Calu3 (cell line): ENCODE measurements at regions of chr3 and their contacts with region 1.

Region 1: DNA sequence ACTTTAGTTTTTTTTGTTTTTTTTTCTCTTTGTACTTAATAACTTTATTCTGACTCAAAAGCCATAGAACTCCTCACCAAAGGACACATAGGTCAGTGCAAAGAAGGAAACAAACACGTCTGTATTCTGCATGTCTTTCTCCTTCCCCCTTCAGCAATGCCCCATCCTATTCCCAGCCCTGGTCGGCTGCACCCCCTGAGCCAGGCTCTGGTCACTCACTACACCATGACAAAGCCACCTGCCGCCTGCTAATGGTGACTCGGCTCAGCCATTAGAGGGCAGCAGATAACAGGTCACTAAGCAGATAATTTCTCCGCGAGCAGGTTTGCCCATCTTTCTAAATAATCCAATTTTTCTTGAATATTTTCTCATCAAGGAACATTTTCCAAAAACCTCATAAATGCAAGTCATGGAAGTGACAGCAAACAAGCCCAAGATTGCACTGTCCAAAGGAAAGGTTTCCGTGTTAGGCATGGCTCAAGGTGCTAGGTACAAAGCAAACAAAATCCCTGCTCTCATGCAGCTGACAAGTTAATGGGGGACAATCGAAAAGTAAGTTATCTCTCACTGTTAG is 37.8 kb downstream of the TM4SF4 start:
- DNase-seq: peak; percentile 82
- H3K4me3 Mint-ChIP-seq: no peak overlapping the region
- H3K27ac Mint-ChIP-seq: peak overlapping the region; percentile 21
- H3K4me1 Mint-ChIP-seq: peaks cover 27% of the 10 kb centered on the region
- H3K27me3 Mint-ChIP-seq: no peaks in the 10 kb centered on the region
- CTCF ChIP-seq: peak; percentile 87

Region 2: GRCh38 chr3:149717391-149718056 is 205.2 kb after region 1 on chr3:
- CTCF ChIA-PET with region 1: interaction called, 4 read pairs
- intact Hi-C with region 1: loop called (anchors 1 kb)
- DNase-seq: peak; percentile 74
- H3K4me3 Mint-ChIP-seq: peak overlapping the region; percentile 20
- H3K27ac Mint-ChIP-seq: peak overlapping the region; percentile 58
- H3K4me1 Mint-ChIP-seq: peaks cover 9% of the 10 kb centered on the region
- H3K27me3 Mint-ChIP-seq: no peaks in the 10 kb centered on the region
- CTCF ChIP-seq: peak; percentile 72

Region 3: DNA sequence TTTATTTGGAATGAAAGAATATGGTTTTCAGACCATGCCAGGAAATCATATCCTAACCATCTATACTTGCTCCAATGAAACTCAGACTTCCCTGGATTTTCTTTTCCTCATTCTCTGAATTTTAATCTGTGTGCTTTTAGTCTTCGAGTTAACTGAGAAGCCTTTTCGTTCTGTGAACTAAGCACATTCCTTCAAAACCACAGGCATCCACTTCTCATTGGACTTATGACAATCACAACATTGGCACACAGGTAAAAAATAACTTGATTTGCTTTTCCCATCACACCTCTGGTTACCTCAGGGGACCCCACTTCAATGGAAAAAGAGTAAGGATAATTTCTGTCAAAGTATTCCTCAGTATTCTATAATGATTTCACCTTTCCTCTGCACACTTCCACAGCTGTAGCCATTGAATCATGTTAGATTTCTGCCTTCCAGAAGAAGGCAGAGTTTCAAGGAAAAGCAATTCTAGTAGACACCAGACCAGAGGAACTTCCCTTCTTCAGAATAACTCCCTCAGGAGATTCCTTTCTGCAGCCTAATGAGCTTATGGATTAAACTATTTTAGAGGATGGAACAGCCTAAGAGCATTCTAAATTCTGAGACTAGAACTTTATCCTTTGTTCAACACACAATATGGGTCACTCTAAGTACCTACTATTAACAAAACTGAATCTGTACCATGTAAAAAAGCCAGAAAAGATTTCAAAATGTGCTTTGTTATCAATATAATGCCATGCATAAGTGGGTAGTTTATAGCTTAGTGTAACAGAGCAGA is 224.1 kb after region 1 on chr3:
- CTCF ChIA-PET with region 1: no interaction called
- intact Hi-C with region 1: loop called (anchors 5 kb)
- DNase-seq: peak; percentile 58
- H3K4me3 Mint-ChIP-seq: no peak overlapping the region
- H3K27ac Mint-ChIP-seq: peak overlapping the region; percentile 30
- H3K4me1 Mint-ChIP-seq: peaks cover 27% of the 10 kb centered on the region
- H3K27me3 Mint-ChIP-seq: no peaks in the 10 kb centered on the region
- CTCF ChIP-seq: no peak

Region 4: GRCh38 chr3:149752051-149752787 is 239.9 kb after region 1 on chr3 and contains the start of gene COMMD2:
- CTCF ChIA-PET with region 1: interaction called, 5 read pairs
- intact Hi-C with region 1: loop called (anchors 1 kb)
- DNase-seq: peak; percentile 92
- H3K4me3 Mint-ChIP-seq: peak within 1 kb of the TSS; percentile 99
- H3K27ac Mint-ChIP-seq: peak within 1 kb of the TSS; percentile 90
- H3K4me1 Mint-ChIP-seq: peaks cover 7% of the 10 kb centered on the region
- H3K27me3 Mint-ChIP-seq: no peaks in the 10 kb centered on the region
- CTCF ChIP-seq: peak; percentile 51
- total RNA-seq, gene COMMD2: 73.0 and 77.1 TPM in 2 replicates

Region 5: DNA sequence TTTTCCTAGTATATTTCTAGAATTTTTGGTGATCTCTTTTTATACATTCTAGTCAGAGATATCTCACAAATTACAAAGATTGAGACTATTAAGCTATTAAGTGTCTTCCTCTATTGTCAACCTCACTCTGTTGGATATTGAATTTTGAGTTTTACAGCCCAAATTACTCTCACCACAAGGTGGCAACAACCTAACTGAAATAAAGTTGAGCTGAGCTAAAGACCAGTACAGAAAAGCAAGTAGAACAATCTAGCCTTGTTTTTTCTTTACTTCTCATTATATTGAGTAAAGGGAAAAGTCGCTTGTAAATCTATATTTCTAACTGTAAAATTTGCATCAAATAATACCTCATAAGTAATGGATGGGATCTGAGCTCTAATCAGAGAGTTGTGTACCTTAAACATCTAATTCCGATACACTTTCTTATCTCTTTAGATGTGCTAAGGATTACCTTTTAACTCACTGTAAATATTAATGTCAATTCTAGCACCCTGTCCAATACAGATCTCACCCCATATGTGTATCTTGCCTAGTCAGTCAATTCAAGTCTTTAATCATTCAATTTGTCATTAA is 253.6 kb after region 1 on chr3:
- CTCF ChIA-PET with region 1: interaction called, 10 read pairs
- intact Hi-C with region 1: loop called (anchors 1 kb)
- DNase-seq: peak; percentile 28
- H3K4me3 Mint-ChIP-seq: no peak overlapping the region
- H3K27ac Mint-ChIP-seq: no peak overlapping the region
- H3K4me1 Mint-ChIP-seq: no peaks in the 10 kb centered on the region
- H3K27me3 Mint-ChIP-seq: no peaks in the 10 kb centered on the region
- CTCF ChIP-seq: peak; percentile 49

Region 6: DNA sequence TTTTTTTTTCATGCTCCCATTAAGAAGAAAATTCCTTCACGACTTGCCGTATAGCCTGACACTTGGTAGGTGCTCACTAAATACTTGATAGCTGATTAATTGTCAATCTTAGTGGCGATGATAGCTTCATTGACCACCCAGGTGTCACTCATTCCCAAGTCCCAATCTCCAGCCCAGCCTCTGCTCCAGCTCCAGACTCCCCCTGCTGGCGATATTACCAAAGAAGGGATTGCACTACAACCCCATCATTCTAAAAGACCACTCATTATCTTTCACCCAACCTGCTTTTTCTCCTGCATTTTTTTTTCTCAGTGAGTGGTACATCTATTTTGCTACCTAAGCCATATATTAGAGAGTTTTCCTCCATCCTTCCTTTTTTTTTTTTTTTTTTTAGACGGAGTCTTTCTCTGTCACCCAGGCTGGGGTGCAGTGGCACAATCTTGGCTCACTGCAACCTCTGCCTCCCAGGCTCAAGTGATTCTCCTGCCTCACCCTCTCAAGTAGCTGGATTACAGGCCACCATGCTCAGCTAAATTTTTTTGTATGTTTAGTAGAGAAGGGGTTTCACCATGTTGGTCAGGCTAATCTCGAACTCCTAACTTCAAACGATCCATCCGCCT is 259.5 kb after region 1 on chr3:
- CTCF ChIA-PET with region 1: interaction called, 10 read pairs
- intact Hi-C with region 1: loop called (anchors 1 kb)
- DNase-seq: peak; percentile 87
- H3K4me3 Mint-ChIP-seq: no peak overlapping the region
- H3K27ac Mint-ChIP-seq: no peak overlapping the region
- H3K4me1 Mint-ChIP-seq: no peaks in the 10 kb centered on the region
- H3K27me3 Mint-ChIP-seq: no peaks in the 10 kb centered on the region
- CTCF ChIP-seq: peak; percentile 95

Region 7: DNA sequence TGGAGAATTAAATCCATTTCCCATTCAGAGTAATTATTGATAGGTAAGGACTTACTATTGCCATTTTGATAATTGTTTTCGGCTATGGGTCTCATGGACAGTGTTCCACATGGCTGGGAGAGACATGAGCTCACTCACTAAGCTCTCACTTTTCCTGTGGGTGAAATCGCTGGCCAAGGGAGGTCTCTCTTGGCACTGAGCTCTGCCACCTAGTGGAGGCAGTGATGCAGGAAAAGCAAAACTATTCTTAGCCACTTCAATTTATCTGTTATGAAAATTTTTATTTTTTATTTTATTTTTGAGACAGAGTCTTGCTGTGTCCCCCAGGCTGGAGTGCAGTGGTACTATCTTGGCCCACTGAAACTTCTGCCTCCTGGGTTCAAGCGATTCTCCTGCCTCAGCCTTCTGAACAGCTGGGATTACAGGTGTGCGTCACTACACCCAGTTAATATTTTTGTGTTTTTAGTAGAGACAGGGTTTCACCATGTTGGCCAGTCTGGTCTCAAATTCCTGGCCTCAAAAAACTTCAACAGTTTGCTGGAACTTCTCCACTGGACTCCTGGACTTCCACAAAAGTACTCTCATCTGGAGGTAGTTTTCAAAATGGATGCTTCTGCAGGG is 296.0 kb after region 1 on chr3:
- CTCF ChIA-PET with region 1: interaction called, 7 read pairs
- intact Hi-C with region 1: loop called (anchors 1 kb)
- DNase-seq: peak; percentile 83
- H3K4me3 Mint-ChIP-seq: no peak overlapping the region
- H3K27ac Mint-ChIP-seq: no peak overlapping the region
- H3K4me1 Mint-ChIP-seq: peaks cover 16% of the 10 kb centered on the region
- H3K27me3 Mint-ChIP-seq: no peaks in the 10 kb centered on the region
- CTCF ChIP-seq: peak; percentile 93